PC-3 (cell line): ENCODE measurements at regions of chr10 and their contacts with region 1.

Region 1: DNA sequence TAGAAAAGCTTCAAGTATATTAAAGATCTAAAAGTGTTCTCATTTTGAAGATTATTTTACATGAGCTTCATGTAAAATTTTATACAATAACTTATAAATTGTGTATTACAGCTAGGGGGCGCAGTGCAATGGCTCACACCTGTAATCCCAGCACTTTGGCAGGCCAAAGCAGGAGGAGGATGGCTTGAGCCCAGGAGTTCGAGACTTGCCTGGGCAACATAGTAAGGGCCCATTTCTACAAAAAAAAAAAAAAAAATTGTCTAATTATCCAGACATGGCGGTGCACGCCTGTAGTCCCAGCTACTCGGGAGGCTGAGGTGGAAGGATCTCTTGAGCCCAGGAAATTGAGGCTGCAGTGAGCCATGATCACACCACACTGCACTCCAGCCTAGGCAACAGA is 16.6 kb downstream of the ACBD5 start:
- DNase-seq: peak; percentile 51
- ATAC-seq: peak; percentile 51
- H3K4me3 ChIP-seq: no peak overlapping the region
- H3K27ac ChIP-seq: no peak overlapping the region
- H3K4me1 ChIP-seq: no peaks in the 10 kb centered on the region
- H3K27me3 ChIP-seq: no peaks in the 10 kb centered on the region
- CTCF ChIP-seq: peak; percentile 61

Region 2: GRCh38 chr10:27285108-27285507 is 61.1 kb after region 1 on chr10:
- CTCF ChIA-PET with region 1: interaction called, 5 read pairs
- POLR2A ChIA-PET with region 1: no interaction called
- intact Hi-C with region 1: loop called (anchors 1 kb)
- DNase-seq: peak; percentile 45
- ATAC-seq: peak; percentile 58
- H3K4me3 ChIP-seq: no peak overlapping the region
- H3K27ac ChIP-seq: no peak overlapping the region
- H3K4me1 ChIP-seq: no peaks in the 10 kb centered on the region
- H3K27me3 ChIP-seq: no peaks in the 10 kb centered on the region
- CTCF ChIP-seq: peak; percentile 54

Region 3: DNA sequence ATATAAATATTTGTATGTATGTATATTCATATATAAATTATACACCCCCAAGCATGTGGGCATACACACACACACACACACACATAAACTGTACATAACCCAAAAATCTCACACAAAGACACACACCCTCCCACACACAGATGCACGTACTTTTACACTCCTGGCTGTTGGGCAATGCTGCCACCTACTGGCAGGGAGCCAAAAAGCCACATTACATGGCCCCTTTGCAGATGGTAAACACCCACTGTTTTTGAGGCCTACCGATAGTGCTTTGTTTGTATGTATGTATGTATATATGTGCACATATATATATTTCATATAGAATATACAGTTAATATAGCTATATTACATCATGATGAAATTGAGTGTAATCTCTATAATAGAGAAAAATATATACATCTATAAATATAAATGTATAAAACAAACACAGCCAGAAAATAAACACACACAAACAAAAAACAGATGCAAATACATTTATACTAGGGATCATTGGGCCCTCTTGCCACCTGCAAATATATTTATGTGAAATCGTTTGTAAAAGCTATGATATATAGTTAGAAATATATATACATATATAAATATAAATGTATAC is 136.7 kb after region 1 on chr10:
- CTCF ChIA-PET with region 1: no interaction called
- POLR2A ChIA-PET with region 1: no interaction called
- intact Hi-C with region 1: loop called (anchors 2 kb)
- DNase-seq: peak; percentile 73
- ATAC-seq: peak; percentile 78
- H3K4me3 ChIP-seq: no peak overlapping the region
- H3K27ac ChIP-seq: no peak overlapping the region
- H3K4me1 ChIP-seq: no peaks in the 10 kb centered on the region
- H3K27me3 ChIP-seq: no peaks in the 10 kb centered on the region
- CTCF ChIP-seq: peak; percentile 72